ENCODE measurements at regions of chr6 and their contacts with region 1.

Region 1: GRCh38 chr6:18503593-18504231 is 116.6 kb downstream of the RNF144B start:
- DNase-seq: no peak

Region 2: GRCh38 chr6:18323935-18324705 is 179.6 kb before region 1 on chr6:
- intact Hi-C with region 1: loop called (anchors 2 kb)
- DNase-seq: no peak

Region 3: GRCh38 chr6:18457065-18457812 is 46.5 kb before region 1 on chr6:
- intact Hi-C with region 1: loop called in 1 of 2 experiments (anchors 10 kb)
- DNase-seq: no peak

Measured in posterior vena cava (tissue), 2 donors.